ENCODE measurements at regions of chr17 and their contacts with region 1.

Region 1: GRCh38 chr17:37047631-37048104 is 98.9 kb downstream of the AATF start:
- DNase-seq: peak; percentile 80 to 87
- ATAC-seq: peak; percentile 82 to 90
- H3K4me3 ChIP-seq: no peak overlapping the region
- H3K27ac ChIP-seq: no peak overlapping the region
- H3K4me1 ChIP-seq: peaks cover 4% of the 10 kb centered on the region; the same call in 2 of the 3 replicates
- CTCF ChIP-seq: peak; percentile 98
- EP300 ChIP-seq: no peak
- POLR2A ChIP-seq: no peak
- RAD21 ChIP-seq: peak; percentile 96 to 97

Region 2: DNA sequence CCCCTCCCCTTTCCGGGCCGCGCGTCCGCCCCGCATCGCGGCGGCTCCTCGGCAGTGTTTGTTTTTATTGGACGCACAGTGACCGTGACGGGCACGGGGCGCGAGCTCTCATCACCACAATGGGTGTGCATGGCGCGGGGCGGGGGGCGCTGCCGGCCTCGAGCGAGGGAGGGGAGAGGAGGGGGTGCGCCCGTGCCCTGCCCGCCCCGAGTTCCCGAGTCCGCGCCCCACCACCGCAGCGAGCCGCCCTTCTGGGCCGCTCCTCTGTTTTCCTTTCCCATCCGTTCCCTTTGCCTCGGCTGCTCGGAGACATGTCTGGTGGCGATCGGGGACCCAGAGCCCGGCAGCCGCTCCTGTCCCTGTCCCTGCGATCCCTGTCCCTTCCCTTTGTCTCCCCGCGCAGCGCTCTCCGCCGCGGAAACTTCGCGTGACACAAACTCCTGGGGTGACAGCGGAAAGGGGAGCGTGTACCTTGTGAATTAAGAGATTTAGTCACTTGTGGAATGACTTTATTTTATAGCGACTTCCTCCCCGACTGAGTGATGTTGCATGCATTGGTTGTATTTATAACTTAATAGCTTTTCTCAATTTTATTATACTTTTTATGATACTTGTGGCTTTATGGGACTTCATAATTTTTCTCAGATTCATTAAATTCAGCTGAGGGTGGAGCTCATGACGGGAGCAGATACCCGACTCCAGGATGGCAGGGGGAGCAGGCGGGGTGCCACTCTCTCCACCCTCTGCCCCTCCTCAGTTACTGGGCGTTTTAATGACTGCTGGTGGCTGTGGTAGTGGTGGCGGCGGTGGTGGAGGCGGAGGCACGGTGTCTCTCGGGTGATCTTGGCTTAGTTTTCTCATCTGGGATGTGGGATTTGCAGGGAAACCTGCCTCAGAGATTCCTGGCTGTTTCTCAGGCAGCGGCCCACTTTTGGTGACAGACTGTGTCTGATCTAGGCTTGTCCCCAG is 405.5 kb before region 1 on chr17:
- CTCF ChIA-PET with region 1: interaction called, 263 read pairs
- POLR2A ChIA-PET with region 1: no interaction called
- DNase-seq: peak in 1 of 2 experiments; percentile 22
- ATAC-seq: peak; percentile 25 to 61; a peak in 3 of 6 replicates
- H3K4me3 ChIP-seq: peak overlapping the region; percentile 44
- H3K27ac ChIP-seq: peak overlapping the region in 1 of 2 experiments; percentile 43; a peak in 2 of 6 replicates
- H3K4me1 ChIP-seq: no peaks in the 10 kb centered on the region
- CTCF ChIP-seq: no peak
- EP300 ChIP-seq: no peak
- POLR2A ChIP-seq: no peak
- RAD21 ChIP-seq: no peak

Region 3: GRCh38 chr17:36768394-36768793 is 279.3 kb before region 1 on chr17:
- CTCF ChIA-PET with region 1: interaction called, 14 read pairs
- POLR2A ChIA-PET with region 1: no interaction called
- DNase-seq: no peak
- ATAC-seq: peak; percentile 32 to 78; a peak in 5 of 6 replicates
- H3K4me3 ChIP-seq: no peak overlapping the region
- H3K27ac ChIP-seq: no peak overlapping the region
- H3K4me1 ChIP-seq: no peaks in the 10 kb centered on the region
- CTCF ChIP-seq: peak; percentile 34
- EP300 ChIP-seq: no peak
- POLR2A ChIP-seq: no peak
- RAD21 ChIP-seq: peak; percentile 53 to 59

Region 4: DNA sequence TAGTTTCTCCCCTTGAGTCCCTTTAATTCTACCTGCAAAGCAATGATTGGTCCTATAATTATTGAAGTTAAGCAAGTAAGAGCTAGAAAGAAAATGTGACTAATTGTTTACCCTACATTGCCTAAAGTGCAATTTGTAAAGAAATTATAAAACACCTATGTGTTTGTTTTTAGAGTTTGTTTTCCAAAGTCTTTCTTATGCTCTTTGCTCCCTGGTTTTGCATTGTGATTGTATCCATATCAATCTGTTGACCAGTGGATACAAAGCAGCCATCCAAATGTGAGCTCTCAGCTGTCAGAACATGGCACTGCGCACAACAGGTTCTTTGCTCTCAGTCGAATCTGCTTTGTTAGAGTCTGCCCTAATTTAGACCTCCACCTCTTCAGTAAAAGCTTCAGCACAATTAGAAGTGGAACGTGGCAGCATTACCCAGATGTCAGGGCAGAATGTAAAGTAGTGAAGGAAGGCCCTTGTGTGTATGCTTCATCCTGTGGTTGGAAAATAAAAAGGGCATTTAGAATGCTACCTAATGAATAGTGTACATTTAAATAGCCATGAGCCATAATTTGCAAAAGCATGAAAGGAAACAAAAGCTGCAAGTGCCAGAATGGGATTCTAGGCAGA is 28.4 kb before region 1 on chr17:
- CTCF ChIA-PET with region 1: interaction called, 17 read pairs
- POLR2A ChIA-PET with region 1: no interaction called
- DNase-seq: no peak
- ATAC-seq: no peak
- H3K4me3 ChIP-seq: no peak overlapping the region
- H3K27ac ChIP-seq: no peak overlapping the region
- H3K4me1 ChIP-seq: no peaks in the 10 kb centered on the region
- CTCF ChIP-seq: no peak
- EP300 ChIP-seq: no peak
- POLR2A ChIP-seq: no peak
- RAD21 ChIP-seq: no peak

Region 5: GRCh38 chr17:37081287-37081686 is 33.6 kb after region 1 on chr17:
- CTCF ChIA-PET with region 1: interaction called, 25 read pairs
- POLR2A ChIA-PET with region 1: no interaction called
- DNase-seq: peak in 1 of 2 experiments; percentile 22
- ATAC-seq: peak; percentile 47 to 58; a peak in 4 of 6 replicates
- H3K4me3 ChIP-seq: no peak overlapping the region
- H3K27ac ChIP-seq: no peak overlapping the region
- H3K4me1 ChIP-seq: no peaks in the 10 kb centered on the region
- CTCF ChIP-seq: no peak
- EP300 ChIP-seq: no peak
- POLR2A ChIP-seq: no peak
- RAD21 ChIP-seq: no peak

Region 6: GRCh38 chr17:37197336-37197735 is 149.7 kb after region 1 on chr17:
- CTCF ChIA-PET with region 1: no interaction called
- POLR2A ChIA-PET with region 1: no interaction called
- DNase-seq: no peak
- ATAC-seq: no peak; a peak in 2 of 6 replicates
- H3K4me3 ChIP-seq: no peak overlapping the region
- H3K27ac ChIP-seq: no peak overlapping the region
- H3K4me1 ChIP-seq: no peaks in the 10 kb centered on the region
- CTCF ChIP-seq: no peak
- EP300 ChIP-seq: no peak
- POLR2A ChIP-seq: no peak
- RAD21 ChIP-seq: no peak

Region 7: DNA sequence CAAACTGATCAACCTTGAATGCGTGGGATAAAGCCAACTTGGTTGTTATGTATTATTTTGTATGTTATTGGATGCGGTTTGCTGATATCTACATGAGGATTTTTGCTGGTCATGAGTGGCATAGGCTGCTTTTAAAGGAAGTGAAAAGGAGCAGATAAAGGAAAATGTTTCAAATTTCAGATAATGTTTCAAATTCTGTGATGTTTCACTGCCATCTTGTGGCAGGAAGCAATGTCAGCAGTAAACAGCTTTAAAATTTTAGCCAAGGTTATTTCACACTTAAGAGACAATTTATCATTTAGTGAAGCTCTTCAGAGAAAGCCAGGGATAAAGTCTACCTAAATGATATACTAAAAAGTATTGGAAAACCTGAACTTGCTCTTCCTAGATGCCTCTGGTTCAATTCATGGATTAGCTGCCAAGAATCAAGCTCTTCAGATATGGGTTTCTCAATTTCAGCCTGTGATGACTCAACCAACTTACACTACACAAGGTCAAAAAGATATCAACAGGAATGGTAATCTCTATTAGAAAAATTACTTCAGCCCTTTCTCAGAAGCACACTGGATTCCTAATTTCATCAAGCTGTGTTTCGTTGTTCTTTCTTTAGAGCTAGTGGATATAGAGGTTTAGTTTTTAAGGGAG is 192.1 kb after region 1 on chr17:
- CTCF ChIA-PET with region 1: interaction called, 15 read pairs
- POLR2A ChIA-PET with region 1: interaction called, 4 read pairs
- DNase-seq: peak; percentile 21 to 38
- ATAC-seq: peak; percentile 57 to 64; a peak in 4 of 6 replicates
- H3K4me3 ChIP-seq: no peak overlapping the region
- H3K27ac ChIP-seq: no peak overlapping the region
- H3K4me1 ChIP-seq: 0 out of 3 replicates have a peak, but pooled peaks cover 6% of the 10 kb centered on the region
- CTCF ChIP-seq: peak; percentile 86
- EP300 ChIP-seq: no peak
- POLR2A ChIP-seq: no peak
- RAD21 ChIP-seq: peak; percentile 44 to 60

Measured in A549 (cell line).